ENCODE measurements at regions of chr10 and their contacts with region 1.

Region 1: GRCh38 chr10:103592186-103593021 is 98.9 kb downstream of the NEURL1 start:
- DNase-seq: peak; percentile 79
- ATAC-seq: peak; percentile 92
- H3K4me3 Mint-ChIP-seq: no peak overlapping the region
- H3K27ac Mint-ChIP-seq: no peak overlapping the region
- H3K4me1 Mint-ChIP-seq: peaks cover 5% of the 10 kb centered on the region
- H3K27me3 Mint-ChIP-seq: peaks cover 4% of the 10 kb centered on the region; the same call in 1 of the 2 replicates
- CTCF ChIP-seq: peak; percentile 77

Region 2: DNA sequence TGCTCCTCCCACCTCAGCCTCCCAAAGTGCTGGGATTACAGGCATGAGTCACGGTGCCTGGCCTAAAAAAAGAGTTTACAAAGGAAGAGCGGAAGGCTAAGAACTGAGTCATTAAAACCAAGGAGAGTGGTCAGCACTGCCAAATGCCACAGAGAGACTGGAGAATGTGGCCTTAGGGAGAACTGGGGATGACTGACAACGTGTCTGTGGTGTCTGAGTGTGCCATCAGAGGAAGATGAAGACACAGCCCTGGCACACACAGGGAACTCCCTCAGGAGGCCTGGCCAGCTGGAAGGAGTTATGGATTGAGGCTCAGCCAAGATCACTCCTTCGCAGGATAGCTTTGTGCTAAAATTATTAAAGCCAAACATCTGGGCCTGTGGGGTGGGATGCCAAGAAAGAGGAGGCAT is 319.4 kb before region 1 on chr10:
- CTCF ChIA-PET with region 1: no interaction called
- POLR2A ChIA-PET with region 1: no interaction called
- DNase-seq: no peak
- ATAC-seq: no peak
- H3K4me3 Mint-ChIP-seq: no peak overlapping the region
- H3K27ac Mint-ChIP-seq: no peak overlapping the region
- H3K4me1 Mint-ChIP-seq: peaks cover 6% of the 10 kb centered on the region
- H3K27me3 Mint-ChIP-seq: peaks cover 46% of the 10 kb centered on the region
- CTCF ChIP-seq: no peak

Region 3: DNA sequence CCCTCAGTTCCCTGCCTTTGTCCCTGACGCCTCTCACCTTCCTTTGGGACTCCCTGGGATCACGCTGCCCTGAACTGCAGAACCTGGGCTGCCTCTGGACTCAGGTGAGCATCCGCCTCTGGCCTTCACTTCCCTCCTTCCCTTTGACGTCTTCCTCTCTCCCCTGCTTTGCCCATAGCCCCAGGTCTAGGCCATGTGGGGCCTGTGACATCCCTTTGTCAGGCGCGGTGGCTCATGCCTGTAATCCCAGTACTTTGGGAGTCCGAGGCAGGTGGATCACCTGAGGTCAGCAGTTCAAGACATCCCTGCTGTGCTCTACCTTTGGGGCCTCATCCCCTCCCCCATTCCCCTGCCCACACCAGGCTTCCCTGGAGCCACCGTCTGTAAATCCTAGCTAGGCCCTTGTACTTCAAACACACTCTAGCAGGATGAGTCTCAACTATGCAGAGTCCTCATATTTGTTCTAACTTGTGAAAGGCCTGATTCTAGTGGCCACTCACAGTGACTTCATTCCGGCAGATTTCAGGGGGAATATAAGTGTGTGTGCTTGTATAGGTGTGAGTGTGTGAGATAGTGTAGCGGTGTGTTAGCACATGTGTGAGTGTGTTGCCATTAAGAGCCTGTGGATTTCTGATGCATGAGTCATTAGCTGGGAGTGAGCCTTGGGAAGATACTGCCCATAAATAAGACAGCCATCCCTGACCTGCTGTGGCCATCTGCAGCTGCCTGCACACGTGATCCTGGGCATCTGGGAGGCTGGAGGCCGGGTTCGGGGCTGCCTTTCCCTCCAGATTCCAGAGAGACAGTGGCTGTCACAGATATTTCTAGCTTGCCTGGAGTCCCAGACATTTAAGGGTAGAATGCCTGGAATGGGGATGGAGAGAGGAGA is 100.7 kb before region 1 on chr10:
- CTCF ChIA-PET with region 1: interaction called, 30 read pairs
- POLR2A ChIA-PET with region 1: no interaction called
- DNase-seq: no peak
- ATAC-seq: no peak
- H3K4me3 Mint-ChIP-seq: 0 out of 2 replicates have a peak overlapping the region, but pooled peaks have one; percentile 11
- H3K27ac Mint-ChIP-seq: no peak overlapping the region
- H3K4me1 Mint-ChIP-seq: peaks cover 9% of the 10 kb centered on the region
- H3K27me3 Mint-ChIP-seq: peaks cover 49% of the 10 kb centered on the region
- CTCF ChIP-seq: no peak

Region 4: GRCh38 chr10:103564776-103565520 is 27.5 kb before region 1 on chr10:
- CTCF ChIA-PET with region 1: interaction called, 13 read pairs
- POLR2A ChIA-PET with region 1: no interaction called
- DNase-seq: peak; percentile 87
- ATAC-seq: peak; percentile 93
- H3K4me3 Mint-ChIP-seq: no peak overlapping the region
- H3K27ac Mint-ChIP-seq: no peak overlapping the region
- H3K4me1 Mint-ChIP-seq: no peaks in the 10 kb centered on the region
- H3K27me3 Mint-ChIP-seq: no peaks in the 10 kb centered on the region; the same call in 1 of the 2 replicates
- CTCF ChIP-seq: peak; percentile 99

Region 5: DNA sequence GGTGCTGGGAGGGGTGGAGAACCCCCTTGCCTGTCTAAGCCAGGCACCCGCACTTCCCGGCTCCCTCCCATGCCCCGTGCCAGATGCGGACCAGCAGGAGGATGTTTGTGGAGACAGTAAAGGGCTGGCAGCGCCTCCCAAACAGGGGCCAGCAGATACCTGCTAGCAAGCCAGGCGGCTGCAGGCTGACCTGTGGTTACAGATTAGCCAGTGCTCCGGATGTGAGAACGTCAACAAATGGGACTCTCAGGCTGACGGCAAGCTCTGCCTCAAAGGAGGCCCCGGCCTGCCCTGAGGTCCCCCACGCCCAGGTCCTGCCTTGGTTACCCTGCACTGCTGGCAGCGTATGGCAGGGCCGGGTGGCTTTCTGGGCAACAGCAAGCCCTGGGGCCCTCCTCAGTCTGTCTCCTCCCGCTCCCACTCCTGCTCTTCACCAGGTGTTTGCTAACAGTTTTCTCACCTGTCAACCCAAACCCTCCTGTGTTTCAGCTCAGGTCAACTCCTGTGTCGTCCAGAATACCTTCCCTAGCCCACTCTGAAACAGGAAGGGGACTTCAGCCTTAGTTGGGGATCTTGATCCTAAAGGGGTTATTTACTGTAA is 13.5 kb before region 1 on chr10:
- CTCF ChIA-PET with region 1: interaction called, 27 read pairs
- POLR2A ChIA-PET with region 1: no interaction called
- DNase-seq: no peak
- ATAC-seq: no peak
- H3K4me3 Mint-ChIP-seq: no peak overlapping the region
- H3K27ac Mint-ChIP-seq: no peak overlapping the region
- H3K4me1 Mint-ChIP-seq: 0 out of 2 replicates have a peak, but pooled peaks cover under 1% of the 10 kb centered on the region
- H3K27me3 Mint-ChIP-seq: peaks cover 16% of the 10 kb centered on the region
- CTCF ChIP-seq: no peak

Region 6: DNA sequence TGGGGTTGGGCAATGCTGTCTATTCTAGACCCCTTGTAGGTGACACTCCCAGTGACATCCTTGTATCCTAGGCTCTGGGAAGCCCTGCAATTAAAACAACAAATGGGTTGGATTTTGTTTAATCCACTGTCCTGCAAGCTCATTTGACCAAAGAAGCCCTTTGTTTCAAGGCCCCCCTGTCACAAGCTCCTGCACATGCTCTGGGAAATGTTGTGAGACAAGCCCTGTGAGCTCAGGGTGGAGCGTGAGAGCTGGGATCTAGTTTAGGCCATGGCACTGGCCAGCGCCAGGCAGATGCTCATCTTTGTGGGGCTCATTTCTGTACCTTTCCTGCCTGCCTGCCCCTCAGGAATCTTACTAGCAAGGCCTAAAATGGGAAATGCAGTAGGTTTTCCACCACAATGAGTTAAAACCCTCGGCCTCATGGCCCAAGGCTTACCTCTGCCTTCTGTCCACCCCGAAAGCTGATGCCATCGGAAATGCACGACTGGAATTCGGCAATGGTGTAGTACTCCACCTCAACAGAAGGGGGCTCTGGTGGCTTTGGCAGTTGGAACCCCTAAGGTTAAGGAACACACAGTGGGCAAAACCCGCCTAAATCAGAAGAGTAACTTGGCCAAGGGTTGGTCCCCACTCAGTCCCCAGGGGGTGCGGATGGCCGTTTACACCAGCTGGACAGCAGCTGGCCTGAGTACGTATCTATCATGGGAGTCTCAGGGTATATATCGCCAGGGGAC is 13.1 kb after region 1 on chr10:
- CTCF ChIA-PET with region 1: interaction called, 13 read pairs
- POLR2A ChIA-PET with region 1: no interaction called
- DNase-seq: peak; percentile 77
- ATAC-seq: peak; percentile 76
- H3K4me3 Mint-ChIP-seq: no peak overlapping the region
- H3K27ac Mint-ChIP-seq: no peak overlapping the region
- H3K4me1 Mint-ChIP-seq: no peaks in the 10 kb centered on the region
- H3K27me3 Mint-ChIP-seq: peaks cover 5% of the 10 kb centered on the region; the same call in 1 of the 2 replicates
- CTCF ChIP-seq: peak; percentile 75

Region 7: DNA sequence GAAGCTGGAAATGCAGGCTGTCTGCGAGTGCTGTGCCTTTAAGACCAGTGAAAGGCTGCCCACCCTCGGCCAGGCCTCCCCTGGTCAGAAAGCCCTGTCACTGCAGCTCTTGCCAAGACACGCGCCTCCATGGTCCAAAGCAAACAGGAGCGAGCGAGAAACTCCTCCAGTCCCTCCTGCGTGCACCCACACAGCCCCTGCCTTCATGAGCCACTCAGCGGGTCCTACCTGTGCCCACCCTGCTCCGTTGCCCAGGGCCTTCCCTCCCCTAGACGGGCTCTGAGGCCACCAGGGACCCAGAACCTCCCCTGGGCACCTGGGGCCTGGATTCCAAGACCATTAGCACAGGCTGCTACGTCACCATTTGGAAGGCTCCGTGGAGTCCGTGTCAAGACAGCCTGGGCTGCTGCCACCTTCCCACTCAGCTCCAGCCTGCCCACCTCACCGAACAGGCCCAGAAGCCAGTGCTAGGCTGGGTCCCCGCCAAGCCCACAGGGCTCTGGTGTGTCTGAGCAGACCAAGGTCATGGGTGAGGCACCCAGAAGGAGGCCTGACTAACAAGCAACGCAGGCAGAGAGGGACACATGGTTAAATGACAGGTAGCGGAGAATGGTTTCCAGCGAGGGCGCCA is 45.6 kb after region 1 on chr10:
- CTCF ChIA-PET with region 1: interaction called, 16 read pairs
- POLR2A ChIA-PET with region 1: no interaction called
- DNase-seq: no peak
- ATAC-seq: no peak
- H3K4me3 Mint-ChIP-seq: no peak overlapping the region
- H3K27ac Mint-ChIP-seq: no peak overlapping the region
- H3K4me1 Mint-ChIP-seq: peaks cover 51% of the 10 kb centered on the region
- H3K27me3 Mint-ChIP-seq: no peaks in the 10 kb centered on the region
- CTCF ChIP-seq: no peak

Region 8: DNA sequence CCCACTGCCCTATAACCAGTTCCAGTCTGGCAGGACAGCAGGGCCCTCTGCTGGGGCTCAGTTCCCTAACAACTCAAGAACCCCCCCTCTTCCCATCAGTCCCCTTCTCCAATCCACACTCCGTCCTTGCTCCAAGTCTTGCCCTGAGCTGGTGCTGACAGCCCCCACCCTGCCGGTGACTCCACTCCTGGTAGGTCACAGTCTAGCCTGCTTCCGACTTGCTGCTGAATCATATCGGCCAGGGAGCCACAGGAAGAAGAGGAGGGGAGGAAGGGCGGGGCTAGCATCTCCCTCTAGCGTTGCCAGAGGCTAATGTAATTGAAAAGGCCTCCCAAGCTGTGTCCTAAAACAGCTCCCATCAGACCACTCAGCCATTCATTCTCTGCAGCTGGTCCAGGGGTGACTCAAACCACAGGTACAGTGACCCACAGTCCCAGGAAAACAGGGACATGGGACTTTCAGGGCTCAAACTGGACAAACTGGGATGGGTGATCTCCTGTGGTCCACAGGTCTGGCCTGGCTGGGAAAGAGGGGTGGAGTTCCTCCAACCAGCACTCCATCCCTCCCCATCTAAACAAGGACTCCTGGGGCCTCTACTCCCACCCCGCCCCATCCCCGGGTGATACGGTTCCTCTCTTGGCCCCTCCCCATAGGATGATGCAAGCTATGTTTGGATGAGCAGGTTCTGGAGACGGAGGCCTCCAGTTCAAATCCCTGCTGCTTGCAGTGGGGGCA is 104.2 kb after region 1 on chr10:
- CTCF ChIA-PET with region 1: interaction called, 14 read pairs
- POLR2A ChIA-PET with region 1: no interaction called
- DNase-seq: peak; percentile 55
- ATAC-seq: peak; percentile 53
- H3K4me3 Mint-ChIP-seq: no peak overlapping the region
- H3K27ac Mint-ChIP-seq: no peak overlapping the region; the same call in 1 of the 2 replicates
- H3K4me1 Mint-ChIP-seq: peaks cover 28% of the 10 kb centered on the region
- H3K27me3 Mint-ChIP-seq: peaks cover 32% of the 10 kb centered on the region
- CTCF ChIP-seq: no peak

Region 9: DNA sequence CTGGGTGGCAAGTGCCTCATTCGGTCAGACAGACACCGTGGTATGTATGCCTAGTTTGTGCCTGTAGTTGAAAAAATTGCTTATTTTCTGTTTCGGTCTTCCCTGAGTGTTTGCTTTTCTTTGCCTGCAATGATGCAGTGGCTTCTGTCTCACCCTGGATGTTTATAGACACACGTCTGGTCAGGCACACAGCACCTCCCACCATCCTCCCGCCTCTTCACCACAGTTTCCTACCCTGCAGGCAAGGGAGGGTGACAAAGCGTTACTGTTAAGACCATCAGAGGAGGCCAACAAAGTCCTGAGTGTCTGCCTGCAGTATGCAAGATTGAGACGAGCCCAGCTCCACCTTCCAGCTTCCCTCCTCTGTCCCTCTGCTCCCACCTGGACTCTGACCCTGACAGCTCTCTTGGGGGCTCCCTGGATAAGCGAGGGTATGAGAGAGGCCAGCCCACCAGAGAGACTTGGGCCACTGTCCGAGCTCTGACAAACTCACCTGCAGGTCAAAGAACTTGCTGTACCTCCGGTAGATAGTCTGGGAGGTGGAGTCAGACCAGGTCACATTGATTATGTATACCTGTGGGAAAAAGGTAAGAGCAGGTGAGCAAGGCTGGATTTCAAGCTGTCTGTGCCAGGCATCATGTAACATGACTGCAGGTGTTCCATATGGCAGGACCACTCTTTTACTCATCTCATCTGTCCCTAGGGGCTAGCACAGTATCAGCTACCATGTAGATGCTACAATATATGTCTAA is 208.6 kb after region 1 on chr10:
- CTCF ChIA-PET with region 1: no interaction called
- POLR2A ChIA-PET with region 1: no interaction called
- DNase-seq: no peak
- ATAC-seq: no peak
- H3K4me3 Mint-ChIP-seq: no peak overlapping the region
- H3K27ac Mint-ChIP-seq: no peak overlapping the region
- H3K4me1 Mint-ChIP-seq: peaks cover 32% of the 10 kb centered on the region
- H3K27me3 Mint-ChIP-seq: no peaks in the 10 kb centered on the region; the same call in 1 of the 2 replicates
- CTCF ChIP-seq: no peak

Measured in WTC11 (cell line).